Ascending aorta (tissue), 2 donors: ENCODE measurements at regions of chr17 and their contacts with region 1.

Region 1: GRCh38 chr17:7477392-7478275 is 1.8 kb downstream of the ZBTB4 start:
- DNase-seq: no peak
- H3K4me3 ChIP-seq: peak overlapping the region; percentile 100
- H3K27ac ChIP-seq: peak overlapping the region; percentile 100
- H3K4me1 ChIP-seq: peaks cover 14 to 42% of the 10 kb centered on the region in 2 donors
- H3K27me3 ChIP-seq: no peaks in the 10 kb centered on the region
- CTCF ChIP-seq: no peak

Region 2: GRCh38 chr17:7462474-7463371 is 14.9 kb before region 1 on chr17:
- intact Hi-C with region 1: loop called (anchors 2 kb)
- DNase-seq: no peak
- H3K4me3 ChIP-seq: no peak overlapping the region
- H3K27ac ChIP-seq: no peak overlapping the region
- H3K4me1 ChIP-seq: peaks cover 0 to 12% of the 10 kb centered on the region in 2 donors
- H3K27me3 ChIP-seq: no peaks in the 10 kb centered on the region
- CTCF ChIP-seq: no peak